ENCODE measurements at regions of chrX and their contacts with region 1.

Region 1: GRCh38 chrX:41333744-41334259 is at the start of gene DDX3X:
- DNase-seq: peak; percentile 75
- ATAC-seq: peak; percentile 66
- H3K4me3 ChIP-seq: peak within 1 kb of the TSS; percentile 72 to 88 (median 84)
- H3K27ac ChIP-seq: peak within 1 kb of the TSS; percentile 100
- H3K4me1 ChIP-seq: peaks cover 33% of the 10 kb centered on the region
- H3K27me3 ChIP-seq: no peaks in the 10 kb centered on the region; a peak in 1 of 5 replicates
- CTCF ChIP-seq: peak; percentile 29; the same call in 1 of the 2 replicates
- EP300 ChIP-seq: no peak
- POLR2A ChIP-seq: peak; percentile 99 to 100
- RAD21 ChIP-seq: no peak
- total RNA-seq, gene DDX3X: 239 and 370 TPM in 2 replicates

Region 2: DNA sequence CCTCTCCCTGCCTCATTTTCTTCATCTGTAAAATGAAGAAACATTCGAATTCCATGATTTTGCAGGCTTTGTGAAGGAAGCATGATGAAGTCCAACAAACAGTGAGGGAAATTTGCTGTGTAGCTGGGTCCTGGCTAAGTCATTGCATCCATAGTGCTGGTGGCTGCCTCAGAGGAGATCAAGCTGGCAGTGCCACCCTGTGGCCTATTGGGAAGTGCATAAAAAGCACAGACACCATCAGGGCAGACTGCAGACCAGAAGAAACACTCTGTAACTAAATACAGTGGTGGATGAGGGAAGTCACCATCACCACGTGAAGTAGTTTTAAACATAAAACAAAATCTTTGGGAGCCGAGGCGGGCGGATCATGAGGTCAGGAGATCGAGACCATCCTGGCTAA is 40.5 kb before region 1 on chrX:
- CTCF ChIA-PET with region 1: no interaction called
- POLR2A ChIA-PET with region 1: no interaction called
- in situ Hi-C with region 1: no loop called
- intact Hi-C with region 1: no loop called
- DNase-seq: peak; percentile 11
- ATAC-seq: peak; percentile 90
- H3K4me3 ChIP-seq: no peak overlapping the region
- H3K27ac ChIP-seq: no peak overlapping the region
- H3K4me1 ChIP-seq: 0 out of 2 replicates have a peak, but pooled peaks cover 3% of the 10 kb centered on the region
- H3K27me3 ChIP-seq: no peaks in the 10 kb centered on the region
- CTCF ChIP-seq: peak; percentile 56
- EP300 ChIP-seq: no peak
- POLR2A ChIP-seq: no peak
- RAD21 ChIP-seq: no peak

Region 3: DNA sequence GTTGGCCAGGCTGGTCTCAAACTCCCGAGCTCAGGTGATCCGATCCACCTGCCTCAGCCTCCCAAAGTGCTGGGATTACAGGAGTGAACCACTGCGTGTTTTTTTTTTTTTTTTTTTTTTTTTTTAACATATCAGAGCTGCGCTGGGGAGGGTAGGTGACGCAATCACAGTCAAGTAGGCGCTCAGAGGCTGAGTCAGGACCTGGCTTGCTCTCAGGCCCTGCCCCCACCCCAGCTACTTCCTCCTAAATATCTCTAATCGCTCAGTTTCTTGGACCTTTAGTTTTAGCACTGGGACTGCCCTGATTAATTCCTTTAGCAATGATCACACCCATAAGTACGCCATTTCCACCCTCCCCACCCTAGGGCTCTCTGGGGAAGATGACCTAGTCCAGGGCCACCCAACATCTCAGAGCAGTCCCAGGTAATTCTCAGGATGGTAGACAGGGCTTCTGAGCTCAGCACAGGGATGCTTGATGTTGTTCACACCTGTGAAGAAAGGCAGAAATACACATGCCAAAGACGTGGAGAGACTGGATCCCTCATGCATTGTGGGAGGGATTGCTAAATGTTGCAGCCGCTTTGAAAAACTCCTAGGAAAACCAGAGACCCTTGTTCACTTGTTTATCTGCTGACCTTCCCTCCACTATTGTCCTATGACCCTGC is 50.4 kb after region 1 on chrX:
- CTCF ChIA-PET with region 1: no interaction called
- POLR2A ChIA-PET with region 1: interaction called, 9 read pairs
- in situ Hi-C with region 1: no loop called
- intact Hi-C with region 1: loop called (anchors 5 kb)
- DNase-seq: no peak
- ATAC-seq: no peak
- H3K4me3 ChIP-seq: no peak overlapping the region
- H3K27ac ChIP-seq: no peak overlapping the region
- H3K4me1 ChIP-seq: peaks cover 67% of the 10 kb centered on the region
- H3K27me3 ChIP-seq: no peaks in the 10 kb centered on the region
- CTCF ChIP-seq: no peak
- EP300 ChIP-seq: no peak
- POLR2A ChIP-seq: no peak
- RAD21 ChIP-seq: no peak

Region 4: GRCh38 chrX:41708486-41708885 is 374.7 kb after region 1 on chrX:
- CTCF ChIA-PET with region 1: no interaction called
- POLR2A ChIA-PET with region 1: no interaction called
- in situ Hi-C with region 1: no loop called
- intact Hi-C with region 1: no loop called
- DNase-seq: no peak
- ATAC-seq: no peak
- H3K4me3 ChIP-seq: no peak overlapping the region
- H3K27ac ChIP-seq: no peak overlapping the region
- H3K4me1 ChIP-seq: no peaks in the 10 kb centered on the region
- H3K27me3 ChIP-seq: no peaks in the 10 kb centered on the region
- CTCF ChIP-seq: no peak
- EP300 ChIP-seq: no peak
- POLR2A ChIP-seq: no peak
- RAD21 ChIP-seq: no peak

Measured in HepG2 (cell line).